ENCODE measurements at regions of chrX and their contacts with region 1.

Region 1: GRCh38 chrX:85544609-85545008 is 165.1 kb upstream of the POF1B start:
- DNase-seq: no peak
- H3K4me3 ChIP-seq: no peak overlapping the region
- H3K27ac ChIP-seq: no peak overlapping the region
- H3K4me1 ChIP-seq: no peaks in the 10 kb centered on the region
- CTCF ChIP-seq: peak; percentile 68

Region 2: GRCh38 chrX:85111347-85111746 is 433.3 kb before region 1 on chrX:
- CTCF ChIA-PET with region 1: no interaction called
- POLR2A ChIA-PET with region 1: no interaction called
- intact Hi-C with region 1: loop called (anchors 1 kb)
- DNase-seq: peak; percentile 15
- H3K4me3 ChIP-seq: no peak overlapping the region
- H3K27ac ChIP-seq: no peak overlapping the region
- H3K4me1 ChIP-seq: no peaks in the 10 kb centered on the region
- CTCF ChIP-seq: peak; percentile 83

Region 3: DNA sequence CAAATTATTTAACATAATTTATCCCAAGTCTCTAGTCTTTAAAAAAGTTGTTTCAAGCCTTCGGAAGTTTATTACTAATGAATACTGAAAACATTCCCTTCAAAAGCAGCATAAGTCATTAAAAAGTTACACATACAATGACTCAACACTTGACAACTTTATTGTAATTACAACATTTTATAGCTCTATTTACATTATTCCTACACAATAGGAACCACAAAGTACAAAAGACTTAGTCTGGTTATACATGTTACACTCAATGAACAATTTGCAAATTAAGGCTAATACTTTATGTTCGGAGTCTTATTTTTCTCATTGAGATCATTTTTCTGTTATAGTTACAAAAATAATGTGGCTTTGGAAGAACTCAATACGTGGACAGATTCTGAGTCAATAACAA is 50.8 kb before region 1 on chrX:
- CTCF ChIA-PET with region 1: no interaction called
- POLR2A ChIA-PET with region 1: no interaction called
- intact Hi-C with region 1: loop called (anchors 10 kb)
- DNase-seq: no peak
- H3K4me3 ChIP-seq: no peak overlapping the region
- H3K27ac ChIP-seq: no peak overlapping the region
- H3K4me1 ChIP-seq: no peaks in the 10 kb centered on the region
- CTCF ChIP-seq: no peak

Region 4: DNA sequence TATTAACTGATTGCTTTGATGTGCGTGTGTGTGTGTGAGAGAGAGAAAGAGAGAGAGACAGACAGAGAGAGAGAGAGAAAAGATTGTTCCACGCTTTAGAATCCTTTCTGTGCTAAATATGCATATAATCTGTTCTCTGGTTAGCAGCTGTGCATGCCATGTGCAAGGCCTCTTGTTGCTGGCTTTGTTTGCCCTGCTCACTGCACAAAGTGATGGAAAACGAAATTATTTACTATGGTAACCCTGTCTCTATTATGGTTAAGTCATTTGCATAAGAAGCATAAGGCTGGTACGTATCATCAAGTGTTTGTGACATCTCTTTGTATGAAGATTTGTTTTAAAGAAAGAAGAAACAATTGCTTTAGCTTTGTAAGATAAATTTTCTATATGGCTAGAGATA is 25.1 kb after region 1 on chrX:
- CTCF ChIA-PET with region 1: no interaction called
- POLR2A ChIA-PET with region 1: no interaction called
- intact Hi-C with region 1: no loop called
- DNase-seq: no peak
- H3K4me3 ChIP-seq: no peak overlapping the region
- H3K27ac ChIP-seq: no peak overlapping the region
- H3K4me1 ChIP-seq: no peaks in the 10 kb centered on the region
- CTCF ChIP-seq: no peak